ENCODE measurements at regions of chr11 and their contacts with region 1.

Region 1: DNA sequence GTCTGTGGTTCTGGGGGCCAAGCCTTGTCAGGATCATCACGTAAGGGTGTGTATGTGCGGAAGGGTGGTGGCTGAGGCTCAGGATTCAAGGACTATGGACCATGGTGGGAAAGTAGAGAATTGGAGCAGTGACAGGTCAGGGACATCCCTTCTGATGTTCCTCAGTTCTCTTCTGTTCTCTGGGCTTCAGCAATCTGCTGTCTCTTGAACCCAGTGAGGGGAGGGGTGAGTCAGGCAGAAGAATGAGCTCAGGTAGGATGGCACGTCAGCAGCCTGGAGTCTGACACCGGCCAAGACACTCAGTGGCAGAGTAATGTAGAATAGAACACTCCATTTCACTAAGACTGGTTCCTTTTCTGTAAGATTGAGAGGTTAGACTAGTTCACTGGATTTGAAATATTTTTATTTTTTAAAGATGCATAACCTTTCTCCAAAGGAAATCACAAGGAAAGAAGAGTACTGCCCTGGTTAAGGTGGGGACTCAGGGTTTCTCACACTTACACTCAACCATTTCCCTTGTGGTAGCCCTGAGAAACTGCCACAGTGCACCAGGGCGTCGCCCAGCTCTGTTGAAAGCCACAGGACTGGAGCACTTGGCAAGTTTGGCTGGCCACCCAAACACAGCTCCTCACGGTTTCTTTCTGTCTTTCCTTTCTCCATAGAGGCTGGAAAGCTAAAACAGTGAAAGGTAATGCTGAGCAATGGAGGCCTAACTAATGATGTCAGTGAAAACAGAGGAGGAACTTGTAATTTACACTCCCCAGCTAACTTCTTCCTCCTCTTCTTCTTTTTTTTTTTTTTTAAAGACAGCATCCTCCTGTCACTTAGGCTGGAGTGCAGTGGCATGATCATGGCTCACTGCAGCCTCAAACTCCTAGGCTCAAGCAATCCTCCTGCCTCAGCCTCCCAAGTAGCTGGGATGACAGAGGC is 23.1 kb upstream of the MICAL2 start:
- DNase-seq: no peak

Region 2: DNA sequence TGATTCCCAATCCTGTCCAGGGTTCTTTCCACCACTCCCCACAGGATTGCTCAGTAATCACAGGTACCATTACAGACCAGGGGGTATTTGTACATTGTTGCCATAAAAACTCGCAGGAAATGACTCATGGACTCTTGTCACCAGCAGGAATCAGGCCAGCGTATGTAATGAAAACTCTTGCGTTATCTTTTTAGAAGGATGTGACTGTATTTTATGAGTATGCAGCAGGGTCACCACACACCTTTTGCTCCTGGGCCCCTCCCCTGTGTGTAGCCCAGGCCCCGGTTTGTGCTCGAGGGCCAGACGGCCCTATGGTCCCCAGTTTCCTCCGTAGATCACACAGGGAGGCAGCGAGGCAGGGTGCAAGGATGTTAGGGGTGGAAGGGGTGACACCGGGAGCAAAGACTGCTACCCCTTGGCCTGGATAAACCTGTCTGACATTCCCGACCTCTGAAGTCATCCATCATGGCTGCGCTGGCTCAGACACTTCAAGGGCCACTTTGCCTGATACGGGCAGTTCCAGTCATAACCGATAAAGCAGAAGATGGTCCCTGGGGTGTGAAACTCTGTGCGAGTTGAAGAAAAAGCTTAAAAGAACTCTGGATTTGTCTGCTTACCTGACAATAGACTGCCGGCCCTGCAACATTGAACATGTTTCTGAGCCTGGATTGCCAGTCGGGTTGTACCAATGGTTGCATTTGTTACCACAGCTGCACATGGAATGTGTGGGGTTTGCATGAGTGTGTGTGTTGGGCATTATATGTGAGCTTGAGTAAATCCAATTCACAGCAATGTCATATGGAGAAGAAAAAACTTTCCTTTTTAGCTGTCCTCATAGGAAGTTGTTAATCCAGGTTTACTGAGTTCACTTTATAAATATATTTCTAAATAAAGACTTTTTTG is 80.0 kb after region 1 on chr11:
- in situ Hi-C with region 1: no loop called
- DNase-seq: no peak

Region 3: DNA sequence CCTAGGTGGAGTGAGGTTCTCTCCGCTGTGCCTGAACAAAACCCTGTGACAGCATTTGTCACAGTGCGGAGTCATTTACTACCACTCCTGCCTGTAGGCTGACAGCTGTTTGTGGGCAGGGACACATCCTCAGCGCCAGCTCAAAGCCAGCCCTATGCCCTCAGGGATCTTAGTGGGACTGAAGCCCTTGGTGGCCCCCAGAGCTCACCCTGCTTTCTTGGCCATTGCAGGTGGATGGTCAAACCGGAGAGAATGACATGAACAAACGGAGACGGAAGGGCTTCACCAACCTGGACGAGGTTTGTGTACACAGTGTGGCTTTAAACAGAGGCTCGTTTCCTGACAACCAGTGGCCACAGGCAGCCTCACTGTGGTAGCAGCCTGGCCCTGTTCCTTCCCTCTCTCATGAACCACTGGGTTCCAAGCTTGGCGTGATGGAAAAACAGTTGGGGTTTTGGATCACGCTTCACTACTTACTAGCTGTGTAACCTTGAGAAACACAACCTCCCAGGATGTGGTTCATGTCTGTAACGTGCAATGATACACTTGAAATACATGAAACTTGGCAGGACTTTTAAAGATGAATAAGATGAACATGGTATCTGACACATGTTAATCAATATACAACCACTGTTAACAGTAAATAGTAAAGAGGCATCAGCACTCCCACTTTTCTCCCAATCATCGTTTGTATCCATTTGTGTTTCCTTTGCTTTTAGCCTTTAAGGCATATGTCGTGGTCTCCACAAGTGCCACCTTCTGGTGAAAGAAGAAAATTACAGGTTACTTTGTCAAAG is 148.8 kb after region 1 on chr11:
- in situ Hi-C with region 1: loop called (anchors 25 kb)
- DNase-seq: peak; percentile 79

Region 4: DNA sequence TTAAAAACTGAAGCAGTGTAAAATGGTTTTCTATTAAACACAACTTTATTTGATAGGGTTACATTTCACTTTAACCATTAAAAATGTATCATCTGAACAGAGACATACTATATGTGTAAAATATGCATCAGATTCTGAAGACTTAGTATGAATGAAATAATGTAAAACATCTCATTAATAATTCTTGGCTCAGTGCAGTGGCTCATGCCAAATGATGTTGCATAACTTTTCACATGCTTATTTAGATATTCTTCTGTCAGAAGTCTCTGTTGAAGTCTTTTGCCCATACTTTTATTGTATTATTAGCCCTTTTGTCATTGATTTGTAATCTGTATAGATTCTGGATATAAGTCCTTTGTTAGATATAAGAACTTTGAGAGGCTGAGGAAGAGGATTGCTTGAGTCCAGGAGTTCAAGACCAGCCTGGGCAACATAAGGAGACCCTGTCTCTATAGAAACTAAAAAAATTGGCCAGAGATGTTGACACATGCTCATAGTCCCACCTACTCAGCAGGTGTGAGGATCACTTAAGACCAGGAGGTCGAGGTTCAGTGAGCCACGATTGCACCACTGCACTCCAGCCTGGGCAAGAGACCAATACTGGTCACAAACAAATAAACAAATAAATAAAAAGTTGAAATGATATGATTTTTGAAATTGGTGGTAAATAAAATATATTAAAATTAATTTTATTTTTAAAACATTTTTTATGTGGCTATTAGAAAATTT is 216.2 kb after region 1 on chr11:
- in situ Hi-C with region 1: no loop called
- DNase-seq: no peak

Measured in SK-MEL-5 (cell line).